ENCODE measurements at regions of chr20 and their contacts with region 1.

Region 1: GRCh38 chr20:3710703-3711483 is 1.5 kb downstream of the SIGLEC1 start:
- DNase-seq: peak; percentile 80
- H3K4me3 Mint-ChIP-seq: no peak overlapping the region
- H3K27ac Mint-ChIP-seq: no peak overlapping the region
- H3K4me1 Mint-ChIP-seq: no peaks in the 10 kb centered on the region
- H3K27me3 Mint-ChIP-seq: peaks cover 3% of the 10 kb centered on the region

Region 2: GRCh38 chr20:3563548-3564177 is 147.2 kb before region 1 on chr20:
- CTCF ChIA-PET with region 1: interaction called, 13 read pairs
- intact Hi-C with region 1: loop called (anchors 1 kb)
- DNase-seq: peak; percentile 19
- H3K4me3 Mint-ChIP-seq: no peak overlapping the region
- H3K27ac Mint-ChIP-seq: no peak overlapping the region
- H3K4me1 Mint-ChIP-seq: no peaks in the 10 kb centered on the region
- H3K27me3 Mint-ChIP-seq: no peaks in the 10 kb centered on the region